Heart left ventricle (tissue), 16 donors: ENCODE measurements at regions of chr6 and their contacts with region 1.

Region 1: GRCh38 chr6:134517145-134517658 is 199.3 kb upstream of the SGK1 start:
- DNase-seq: peak; percentile 79 to 92 (median 80)
- ATAC-seq: peak; percentile 89 to 96 (median 94)
- H3K4me3 ChIP-seq: peak overlapping the region in 6 of 12 donors; percentile 2 to 23 (median 10)
- H3K27ac ChIP-seq: peak overlapping the region; percentile 43 to 83 (median 73)
- H3K4me1 ChIP-seq: peaks cover 6 to 55% (median 30%) of the 10 kb centered on the region in 12 donors
- H3K27me3 ChIP-seq: no peaks in the 10 kb centered on the region
- CTCF ChIP-seq: no peak
- POLR2A ChIP-seq: no peak

Region 2: DNA sequence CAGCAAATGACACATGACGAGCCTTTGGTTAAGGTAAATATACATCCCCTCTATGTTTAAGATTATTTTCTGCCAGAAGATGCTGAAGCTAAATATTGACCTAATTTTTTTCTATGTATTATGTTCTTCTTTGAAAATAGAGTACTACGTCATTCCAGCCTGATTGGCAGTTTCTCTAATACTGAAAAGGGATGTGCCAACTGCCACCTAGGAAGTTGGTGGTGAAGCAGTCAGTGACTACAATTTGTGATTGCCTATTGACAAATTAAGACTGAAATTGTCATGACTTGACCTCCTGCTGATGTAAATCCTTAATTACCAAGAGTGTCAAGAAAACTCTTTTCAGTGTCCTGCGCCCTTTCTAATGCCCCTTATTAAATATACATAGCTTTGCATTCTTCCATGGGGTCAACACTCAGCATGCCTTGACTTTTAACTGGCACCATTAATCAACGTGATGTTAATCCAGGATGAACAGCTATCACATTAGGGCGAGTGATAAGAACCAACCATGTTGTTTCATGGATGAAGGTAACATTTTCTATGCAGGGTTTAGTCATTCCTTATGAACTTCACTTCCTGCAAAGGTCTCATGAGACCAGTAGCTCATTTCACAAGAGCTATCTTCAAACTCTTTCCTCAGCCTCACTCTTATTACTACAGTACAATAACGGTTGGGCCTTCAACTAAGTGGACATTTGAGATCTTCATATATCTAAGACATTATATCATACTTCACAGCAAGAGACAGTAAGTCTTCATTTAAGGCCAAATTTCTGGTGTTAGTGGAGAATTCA is 176.8 kb before region 1 on chr6:
- intact Hi-C with region 1: loop called in 2 of 10 experiments (anchors 5 to 10 kb)
- DNase-seq: no peak
- ATAC-seq: no peak
- H3K4me3 ChIP-seq: no peak overlapping the region
- H3K27ac ChIP-seq: no peak overlapping the region
- H3K4me1 ChIP-seq: peaks cover 0 to 28% (median 7%) of the 10 kb centered on the region in 12 donors
- H3K27me3 ChIP-seq: no peaks in the 10 kb centered on the region
- CTCF ChIP-seq: no peak
- POLR2A ChIP-seq: no peak

Region 3: DNA sequence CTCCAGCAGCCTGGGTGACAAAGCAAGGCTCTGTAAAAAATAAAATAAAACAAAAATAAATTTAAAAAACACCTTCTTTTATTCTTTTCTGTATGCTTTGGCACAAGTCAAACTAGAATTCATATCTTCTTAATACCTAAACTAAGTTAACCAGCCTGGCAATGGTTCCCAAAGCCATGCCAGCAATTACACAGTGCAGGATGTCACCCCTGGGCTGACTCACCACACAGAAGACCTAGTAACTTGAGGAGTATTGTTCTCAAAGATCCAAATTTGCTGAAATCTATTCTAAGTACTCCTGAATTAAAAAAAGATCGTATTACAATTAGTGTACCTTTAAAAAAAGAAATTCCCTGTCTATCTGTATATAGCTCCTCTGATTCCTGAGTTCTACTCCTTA is 36.6 kb before region 1 on chr6:
- intact Hi-C with region 1: loop called in 1 of 10 experiments (anchors 5 kb)
- DNase-seq: peak in 1 of 5 donors; percentile 48
- ATAC-seq: peak in 2 of 4 donors; percentile 50 to 58
- H3K4me3 ChIP-seq: no peak overlapping the region
- H3K27ac ChIP-seq: peak overlapping the region in 1 of 12 donors; percentile 11
- H3K4me1 ChIP-seq: peaks cover 2 to 22% (median 14%) of the 10 kb centered on the region in 12 donors
- H3K27me3 ChIP-seq: no peaks in the 10 kb centered on the region
- CTCF ChIP-seq: no peak
- POLR2A ChIP-seq: no peak

Region 4: DNA sequence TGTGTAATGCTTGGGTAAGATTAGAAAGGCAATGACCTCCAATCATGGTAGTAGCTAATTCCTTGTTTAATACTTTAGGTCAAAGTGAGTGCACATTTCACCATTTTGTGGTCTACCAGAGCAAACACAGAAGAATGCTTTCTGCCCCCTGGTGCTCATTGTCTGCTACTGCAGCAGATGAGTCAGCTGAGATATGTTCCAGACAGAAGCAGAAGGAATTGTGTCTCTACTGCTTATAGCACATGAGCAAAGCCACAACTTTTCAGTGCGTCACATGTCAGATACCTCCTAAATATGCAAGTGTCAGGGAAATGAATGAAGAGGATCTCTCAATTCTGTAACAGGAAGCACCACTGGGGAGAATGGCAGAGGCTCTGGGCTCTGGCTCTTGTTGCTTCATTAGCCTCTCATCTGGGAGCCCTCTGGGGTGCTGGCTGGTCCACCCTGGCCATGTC is 123.8 kb after region 1 on chr6:
- intact Hi-C with region 1: loop called in 1 of 10 experiments (anchors 10 kb)
- DNase-seq: peak; percentile 67 to 78 (median 77)
- ATAC-seq: peak; percentile 85 to 92 (median 89)
- H3K4me3 ChIP-seq: no peak overlapping the region
- H3K27ac ChIP-seq: peak overlapping the region in 3 of 12 donors; percentile 9 to 53 (median 36)
- H3K4me1 ChIP-seq: peaks cover 0 to 27% (median 6%) of the 10 kb centered on the region in 12 donors
- H3K27me3 ChIP-seq: no peaks in the 10 kb centered on the region
- CTCF ChIP-seq: peak; percentile 89 to 99 (median 94)
- POLR2A ChIP-seq: no peak